SK-N-SH (cell line): ENCODE measurements at regions of chr3 and their contacts with region 1.

Region 1: GRCh38 chr3:42613462-42613861 is 13.0 kb downstream of the NKTR start:
- DNase-seq: peak; percentile 20
- H3K4me3 ChIP-seq: no peak overlapping the region
- H3K27ac ChIP-seq: no peak overlapping the region; a peak in 1 of 4 replicates
- H3K4me1 ChIP-seq: peaks cover 0 to 2% of the 10 kb centered on the region in 2 experiments; a peak in 3 of 4 replicates
- H3K27me3 ChIP-seq: no peaks in the 10 kb centered on the region
- CTCF ChIP-seq: peak; percentile 64
- EP300 ChIP-seq: no peak
- RAD21 ChIP-seq: no peak

Region 2: DNA sequence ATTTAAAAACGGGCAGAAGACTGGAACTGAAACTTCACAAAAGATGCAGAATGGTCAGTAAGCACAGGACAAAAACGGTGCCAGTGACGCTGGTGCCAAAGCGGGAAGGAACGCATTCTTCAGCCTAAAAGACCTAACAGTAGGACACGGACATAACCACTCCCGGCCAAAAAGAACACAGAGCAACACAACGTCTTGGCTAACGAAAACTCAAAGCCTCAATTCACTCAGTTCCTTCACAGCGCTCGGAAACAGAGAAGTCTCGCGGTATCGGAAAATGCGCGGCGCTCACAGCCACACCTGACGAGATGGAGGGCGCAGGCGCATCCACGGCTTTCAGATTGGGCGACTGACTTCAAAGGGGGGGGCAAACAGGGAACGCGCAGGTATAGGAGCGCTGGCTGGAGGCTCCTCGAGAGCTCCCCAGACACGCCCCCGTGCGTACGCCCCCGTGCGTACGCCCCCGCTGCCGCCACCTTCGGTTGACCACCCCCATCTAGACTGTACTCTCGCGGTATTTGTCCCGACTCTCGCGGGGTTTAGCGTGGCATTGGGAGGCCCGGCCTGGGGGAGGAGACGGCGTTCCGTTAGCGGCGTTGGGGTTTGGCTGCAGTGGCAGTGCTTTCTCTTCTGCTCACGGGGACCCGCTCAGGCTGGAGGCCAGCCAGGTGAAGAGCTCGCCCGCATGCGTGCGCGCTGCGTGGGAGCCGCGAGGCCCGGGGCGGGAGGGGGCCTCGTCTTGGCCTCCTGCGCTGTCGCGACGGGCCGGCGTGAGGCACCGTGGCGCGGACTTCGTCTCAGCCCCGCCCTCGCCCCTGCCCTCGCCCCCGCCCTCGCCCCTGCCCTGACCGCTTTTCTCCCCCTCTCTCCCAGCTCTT is 13.1 kb before region 1 on chr3 and contains the start of gene NKTR:
- CTCF ChIA-PET with region 1: interaction called, 25 read pairs
- POLR2A ChIA-PET with region 1: no interaction called
- DNase-seq: peak; percentile 95
- H3K4me3 ChIP-seq: peak within 1 kb of the TSS; percentile 80 to 84
- H3K27ac ChIP-seq: peak within 1 kb of the TSS; percentile 89 to 96
- H3K4me1 ChIP-seq: peaks cover 0 to 4% of the 10 kb centered on the region in 2 experiments; a peak in 2 of 4 replicates
- H3K27me3 ChIP-seq: no peaks in the 10 kb centered on the region
- CTCF ChIP-seq: no peak
- EP300 ChIP-seq: peak in 1 of 2 experiments; percentile 20; a peak in 1 of 4 replicates
- RAD21 ChIP-seq: no peak
- polyA plus RNA-seq, gene NKTR: 19.2 and 26.9 TPM in 2 replicates

Region 3: DNA sequence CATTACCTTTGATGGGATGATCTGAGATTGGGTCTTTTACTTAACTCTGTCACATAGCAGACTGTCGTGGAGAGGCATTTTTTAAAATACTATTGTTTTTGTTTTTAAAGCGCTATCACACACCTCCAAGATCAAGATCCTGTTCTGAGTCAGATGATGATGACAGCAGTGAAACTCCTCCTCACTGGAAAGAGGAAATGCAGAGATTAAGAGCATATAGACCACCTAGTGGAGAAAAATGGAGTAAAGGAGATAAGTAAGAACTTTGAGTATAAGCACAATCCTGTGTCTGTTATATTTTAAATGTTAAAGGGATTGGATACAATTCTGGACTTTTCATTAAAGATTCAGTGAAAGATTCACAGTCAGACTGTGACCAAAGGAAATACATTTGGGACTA is 21.6 kb after region 1 on chr3:
- CTCF ChIA-PET with region 1: interaction called, 14 read pairs
- POLR2A ChIA-PET with region 1: no interaction called
- DNase-seq: no peak
- H3K4me3 ChIP-seq: no peak overlapping the region
- H3K27ac ChIP-seq: no peak overlapping the region; a peak in 1 of 4 replicates
- H3K4me1 ChIP-seq: no peaks in the 10 kb centered on the region
- H3K27me3 ChIP-seq: no peaks in the 10 kb centered on the region
- CTCF ChIP-seq: peak; percentile 42
- EP300 ChIP-seq: no peak
- RAD21 ChIP-seq: 0 out of 2 replicates have a peak, but pooled peaks have one; percentile 6

Region 4: DNA sequence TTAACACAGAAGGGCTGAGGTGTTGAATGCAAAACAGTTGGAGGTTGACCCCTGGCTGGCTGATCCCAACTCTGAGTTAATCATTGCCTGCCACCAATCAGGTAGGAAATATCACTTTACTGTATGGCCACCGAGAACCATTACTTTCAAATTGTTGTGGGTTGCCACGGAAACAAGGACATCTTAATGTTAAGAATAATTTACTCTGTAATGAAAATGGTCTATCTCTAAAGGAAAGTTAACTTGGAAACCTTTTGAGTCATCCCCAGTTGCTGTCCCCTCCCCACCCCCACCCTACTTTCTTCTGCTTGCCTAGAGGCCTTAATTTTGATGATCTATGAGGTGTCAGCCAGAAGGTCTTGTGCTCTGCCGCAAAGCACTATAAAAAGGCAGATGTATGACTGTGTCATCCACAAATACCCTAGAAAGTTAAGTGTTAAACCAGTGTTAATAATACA is 594.2 kb after region 1 on chr3:
- CTCF ChIA-PET with region 1: no interaction called
- POLR2A ChIA-PET with region 1: no interaction called
- DNase-seq: no peak
- H3K4me3 ChIP-seq: no peak overlapping the region
- H3K27ac ChIP-seq: no peak overlapping the region
- H3K4me1 ChIP-seq: peaks cover 0 to 9% of the 10 kb centered on the region in 2 experiments; a peak in 2 of 4 replicates
- H3K27me3 ChIP-seq: no peaks in the 10 kb centered on the region
- CTCF ChIP-seq: no peak
- EP300 ChIP-seq: no peak
- RAD21 ChIP-seq: no peak